Left ventricle myocardium superior (tissue), 1 donor: ENCODE measurements at regions of chr21 and their contacts with region 1.

Region 1: GRCh38 chr21:34202553-34203372 is 129.4 kb downstream of the MRPS6 start:
- DNase-seq: peak; percentile 41
- ATAC-seq: no peak

Region 2: GRCh38 chr21:33924079-33924765 is 278.5 kb before region 1 on chr21:
- intact Hi-C with region 1: loop called (anchors 10 kb)
- DNase-seq: peak; percentile 91
- ATAC-seq: peak; percentile 97

Region 3: DNA sequence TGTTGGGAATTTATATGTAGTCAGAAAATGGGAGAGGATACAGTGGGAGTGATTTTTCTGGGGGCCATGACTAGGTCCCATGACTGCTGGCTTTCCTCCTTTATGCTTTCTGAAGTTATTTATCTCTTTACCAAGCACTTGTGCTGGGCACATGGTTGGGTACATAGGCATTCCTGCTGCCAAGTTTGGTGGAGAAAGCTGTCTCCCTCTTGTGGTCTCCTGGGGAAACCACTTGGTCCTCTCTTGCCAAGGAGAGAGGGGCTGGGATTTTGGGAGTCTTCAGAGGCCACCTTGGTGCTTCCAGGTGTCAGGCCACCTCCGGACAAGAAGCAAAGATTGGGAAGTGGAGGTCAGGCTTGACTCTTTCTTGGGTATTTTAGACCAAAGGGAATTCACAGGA is 40.8 kb after region 1 on chr21:
- intact Hi-C with region 1: no loop called
- DNase-seq: no peak
- ATAC-seq: peak; percentile 23

Region 4: DNA sequence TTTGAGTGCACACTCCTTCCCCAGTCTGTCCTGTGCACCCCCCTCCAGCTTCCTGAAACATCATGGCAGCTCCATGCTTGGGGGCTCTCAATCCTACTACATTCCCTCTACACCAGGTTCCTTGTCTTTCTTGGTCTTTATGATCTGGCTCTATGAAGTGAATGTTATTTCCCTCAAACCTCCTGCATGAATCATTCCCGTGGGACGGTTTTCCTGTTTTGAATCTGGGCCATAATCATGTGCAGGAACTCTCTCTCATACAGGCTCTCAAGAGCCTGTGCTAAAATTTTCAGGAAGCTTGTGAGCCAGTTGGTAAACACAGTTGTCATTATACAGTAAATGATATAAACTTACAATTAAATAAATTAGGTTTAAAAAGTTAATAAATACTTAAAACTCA is 71.2 kb after region 1 on chr21:
- intact Hi-C with region 1: no loop called
- DNase-seq: no peak
- ATAC-seq: no peak

Region 5: GRCh38 chr21:34345091-34345871 is 142.5 kb after region 1 on chr21:
- intact Hi-C with region 1: loop called (anchors 5 kb)
- DNase-seq: peak; percentile 39
- ATAC-seq: peak; percentile 57

Region 6: GRCh38 chr21:35697321-35697808 is 1494.6 kb after region 1 on chr21:
- intact Hi-C with region 1: no loop called
- DNase-seq: peak; percentile 78
- ATAC-seq: peak; percentile 91